ENCODE measurements at regions of chr16 and their contacts with region 1.

Region 1: DNA sequence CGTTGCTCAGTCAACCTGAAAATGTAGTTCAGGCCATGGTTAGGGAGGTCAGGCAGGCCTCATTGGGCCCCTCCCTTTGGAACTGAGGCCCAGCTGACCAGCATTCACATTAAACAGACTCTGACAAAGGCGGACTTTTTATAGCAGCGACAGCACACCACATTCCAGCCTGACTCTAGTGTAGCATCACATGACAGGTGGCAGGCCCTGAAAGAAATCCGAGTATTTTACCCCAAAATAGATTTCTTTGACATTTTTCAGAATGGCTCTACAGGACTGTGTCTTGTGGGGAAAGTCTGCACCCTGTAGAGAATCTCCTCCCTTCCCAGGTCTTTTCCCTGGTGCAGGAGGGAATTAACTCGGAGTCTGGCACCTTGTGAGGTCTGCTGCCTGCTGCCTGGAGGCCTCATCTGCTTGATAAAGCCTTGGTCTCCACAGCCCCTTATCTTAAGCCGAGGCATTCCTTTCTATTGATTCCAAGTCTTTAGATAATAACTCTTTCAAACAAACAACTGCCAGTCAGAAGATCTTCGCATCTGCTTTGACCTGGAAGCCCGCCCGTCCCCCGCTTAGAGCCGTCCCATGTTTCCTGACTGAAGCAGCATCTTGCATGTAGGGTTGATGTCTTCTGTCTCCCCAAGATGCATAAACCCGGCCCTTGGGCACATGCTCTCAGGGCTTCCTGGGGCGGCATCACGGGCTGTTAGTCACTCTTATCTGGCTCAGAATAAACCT is 44.0 kb upstream of the CAPN15 start:
- DNase-seq: no peak
- H3K4me3 ChIP-seq: no peak overlapping the region
- H3K27me3 ChIP-seq: no peaks in the 10 kb centered on the region
- CTCF ChIP-seq: no peak

Region 2: GRCh38 chr16:106623-107324 is 376.7 kb before region 1 on chr16:
- CTCF ChIA-PET with region 1: no interaction called
- POLR2A ChIA-PET with region 1: no interaction called
- DNase-seq: no peak
- H3K4me3 ChIP-seq: no peak overlapping the region
- H3K27me3 ChIP-seq: no peaks in the 10 kb centered on the region
- CTCF ChIP-seq: peak; percentile 82

Region 3: GRCh38 chr16:495127-495748 is 11.7 kb after region 1 on chr16:
- CTCF ChIA-PET with region 1: interaction called, 13 read pairs
- POLR2A ChIA-PET with region 1: no interaction called
- DNase-seq: no peak
- H3K4me3 ChIP-seq: no peak overlapping the region
- H3K27me3 ChIP-seq: no peaks in the 10 kb centered on the region
- CTCF ChIP-seq: peak; percentile 60

Measured in BJ (cell line).